ENCODE measurements at regions of chr11 and their contacts with region 1.

Region 1: GRCh38 chr11:86535773-86536172 is 136.6 kb downstream of the ME3 start:
- DNase-seq: no peak
- ATAC-seq: no peak
- H3K4me3 ChIP-seq: no peak overlapping the region
- H3K4me3 Mint-ChIP-seq: no peak overlapping the region
- H3K27ac ChIP-seq: no peak overlapping the region
- H3K27ac Mint-ChIP-seq: no peak overlapping the region
- H3K4me1 ChIP-seq: peaks cover 2% of the 10 kb centered on the region
- H3K4me1 Mint-ChIP-seq: peaks cover 8 to 17% of the 10 kb centered on the region in 2 donors
- H3K27me3 ChIP-seq: no peaks in the 10 kb centered on the region
- H3K27me3 Mint-ChIP-seq: peaks cover 0 to 7% of the 10 kb centered on the region in 2 donors
- CTCF ChIP-seq: no peak

Region 2: GRCh38 chr11:86513700-86514373 is 21.9 kb before region 1 on chr11:
- intact Hi-C with region 1: loop called (anchors 1 kb)
- DNase-seq: no peak
- ATAC-seq: peak in 1 of 3 donors; percentile 32
- H3K4me3 ChIP-seq: no peak overlapping the region
- H3K4me3 Mint-ChIP-seq: no peak overlapping the region
- H3K27ac ChIP-seq: no peak overlapping the region
- H3K27ac Mint-ChIP-seq: no peak overlapping the region
- H3K4me1 ChIP-seq: peaks cover 15% of the 10 kb centered on the region
- H3K4me1 Mint-ChIP-seq: no peaks in the 10 kb centered on the region
- H3K27me3 ChIP-seq: no peaks in the 10 kb centered on the region
- H3K27me3 Mint-ChIP-seq: peaks cover 8 to 11% of the 10 kb centered on the region in 2 donors
- CTCF ChIP-seq: no peak